Ascending aorta (tissue), 2 donors: ENCODE measurements at regions of chr1 and their contacts with region 1.

Region 1: GRCh38 chr1:34742667-34743270 is 12.1 kb upstream of the GJB5 start:
- DNase-seq: peak in 1 of 2 donors; percentile 73
- H3K4me3 ChIP-seq: no peak overlapping the region
- H3K27ac ChIP-seq: no peak overlapping the region
- H3K4me1 ChIP-seq: no peaks in the 10 kb centered on the region
- H3K27me3 ChIP-seq: no peaks in the 10 kb centered on the region
- CTCF ChIP-seq: peak; percentile 62 to 95 (median 89)

Region 2: GRCh38 chr1:33633019-33633801 is 1109.6 kb before region 1 on chr1:
- intact Hi-C with region 1: loop called (anchors 2 kb)
- DNase-seq: peak; percentile 36 to 93
- H3K4me3 ChIP-seq: peak overlapping the region in 1 of 2 donors; percentile 25
- H3K27ac ChIP-seq: no peak overlapping the region
- H3K4me1 ChIP-seq: no peaks in the 10 kb centered on the region
- H3K27me3 ChIP-seq: no peaks in the 10 kb centered on the region
- CTCF ChIP-seq: peak; percentile 79 to 99 (median 99)

Region 3: GRCh38 chr1:34681480-34682451 is 61.0 kb before region 1 on chr1:
- intact Hi-C with region 1: no loop called
- DNase-seq: no peak
- H3K4me3 ChIP-seq: no peak overlapping the region
- H3K27ac ChIP-seq: no peak overlapping the region
- H3K4me1 ChIP-seq: no peaks in the 10 kb centered on the region
- H3K27me3 ChIP-seq: no peaks in the 10 kb centered on the region
- CTCF ChIP-seq: peak in 2 of 3 experiments; percentile 53 to 58

Region 4: GRCh38 chr1:34726861-34727260 is 15.9 kb before region 1 on chr1:
- intact Hi-C with region 1: no loop called
- DNase-seq: no peak
- H3K4me3 ChIP-seq: no peak overlapping the region
- H3K27ac ChIP-seq: no peak overlapping the region
- H3K4me1 ChIP-seq: no peaks in the 10 kb centered on the region
- H3K27me3 ChIP-seq: no peaks in the 10 kb centered on the region
- CTCF ChIP-seq: no peak

Region 5: GRCh38 chr1:34800214-34800613 is 57.4 kb after region 1 on chr1:
- intact Hi-C with region 1: no loop called
- DNase-seq: no peak
- H3K4me3 ChIP-seq: no peak overlapping the region
- H3K27ac ChIP-seq: peak overlapping the region in 1 of 2 donors; percentile 32
- H3K4me1 ChIP-seq: no peaks in the 10 kb centered on the region
- H3K27me3 ChIP-seq: no peaks in the 10 kb centered on the region
- CTCF ChIP-seq: no peak